GM10248 (cell line): ENCODE measurements at regions of chr2 and their contacts with region 1.

Region 1: DNA sequence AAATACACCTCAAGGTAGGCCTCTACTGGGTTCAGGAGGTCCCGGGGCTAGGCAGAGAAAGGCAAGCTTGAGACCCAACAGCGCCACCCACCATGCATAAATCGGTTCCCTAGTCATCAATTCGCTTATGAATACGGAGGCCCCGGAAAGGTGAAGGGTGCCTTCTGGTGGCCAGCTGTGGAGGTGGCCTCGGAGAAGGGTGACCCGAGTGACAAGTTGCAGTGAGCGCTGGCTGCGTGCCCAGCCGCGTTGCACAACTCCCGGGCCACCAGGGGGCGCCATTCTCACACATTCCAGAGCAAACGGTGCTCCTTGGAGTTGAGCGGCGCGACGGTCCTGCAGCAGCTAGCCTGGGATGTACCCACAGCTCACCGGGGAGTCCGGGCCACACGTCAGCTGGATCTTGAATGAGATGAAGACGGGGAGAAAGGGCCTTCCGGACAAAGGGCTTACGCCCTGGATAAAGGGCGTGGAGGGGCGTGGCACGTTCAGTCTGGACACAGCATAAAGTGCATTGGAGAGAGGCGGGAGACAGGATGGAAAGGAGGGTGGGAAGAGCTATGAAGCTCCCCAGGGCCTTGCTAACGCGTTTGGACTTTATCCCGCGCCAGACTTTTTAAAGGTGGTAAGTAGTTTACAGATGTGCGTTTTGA is 20.4 kb downstream of the TMSB10 start:
- DNase-seq: peak; percentile 84
- CTCF ChIP-seq: peak; percentile 99

Region 2: GRCh38 chr2:84870306-84870705 is 55.5 kb before region 1 on chr2:
- CTCF ChIA-PET with region 1: interaction called, 46 read pairs
- POLR2A ChIA-PET with region 1: no interaction called
- DNase-seq: no peak
- CTCF ChIP-seq: peak; percentile 21

Region 3: DNA sequence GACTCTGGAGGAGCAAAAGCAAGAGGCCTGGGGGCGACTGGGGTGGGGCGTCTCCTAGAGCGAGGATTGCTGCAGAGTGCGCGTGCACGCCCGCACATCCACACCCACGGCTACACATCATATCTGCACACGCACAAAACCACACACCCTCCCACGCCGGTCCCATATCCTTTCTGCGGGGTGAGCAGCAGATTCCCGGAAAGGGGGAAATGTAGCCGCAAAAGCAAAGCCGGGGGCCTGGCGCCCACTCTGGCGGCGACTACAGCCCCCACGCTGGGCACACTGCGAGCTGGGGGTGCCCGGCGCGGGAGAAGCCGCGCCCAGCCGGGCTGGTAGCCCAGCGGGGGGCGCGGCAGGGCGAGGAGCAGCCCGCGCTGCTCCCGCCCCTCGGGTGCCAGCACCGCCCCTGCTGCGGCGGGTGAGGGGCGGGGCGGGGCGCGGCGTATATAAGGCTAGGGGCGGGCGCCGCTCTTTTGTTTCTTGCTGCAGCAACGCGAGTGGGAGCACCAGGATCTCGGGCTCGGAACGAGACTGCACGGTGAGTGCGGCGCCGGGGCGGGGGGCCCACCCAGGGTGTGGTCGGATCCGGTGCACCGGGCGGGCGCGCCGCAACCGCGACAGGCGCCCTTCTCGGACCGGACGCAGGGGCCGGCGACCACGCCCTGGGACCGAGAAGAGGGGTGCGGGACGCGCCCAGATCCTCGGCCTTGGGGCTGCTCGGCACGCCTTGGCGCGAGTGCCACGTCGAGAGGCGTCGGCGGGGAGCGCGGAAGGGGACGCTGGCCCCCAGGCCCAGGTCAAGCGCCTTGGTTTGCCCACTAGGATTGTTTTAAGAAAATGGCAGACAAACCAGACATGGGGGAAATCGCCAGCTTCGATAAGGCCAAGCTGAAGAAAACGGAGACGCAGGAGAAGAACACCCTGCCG is 20.4 kb before region 1 on chr2 and contains the start of gene TMSB10:
- CTCF ChIA-PET with region 1: interaction called, 112 read pairs
- POLR2A ChIA-PET with region 1: interaction called, 23 read pairs
- DNase-seq: peak; percentile 93
- CTCF ChIP-seq: peak; percentile 8

Region 4: GRCh38 chr2:84958135-84959044 is 32.5 kb after region 1 on chr2:
- CTCF ChIA-PET with region 1: interaction called, 13 read pairs
- POLR2A ChIA-PET with region 1: interaction called, 3 read pairs
- DNase-seq: no peak
- CTCF ChIP-seq: no peak

Region 5: GRCh38 chr2:85001595-85001994 is 75.7 kb after region 1 on chr2:
- CTCF ChIA-PET with region 1: interaction called, 23 read pairs
- POLR2A ChIA-PET with region 1: no interaction called
- DNase-seq: no peak
- CTCF ChIP-seq: no peak

Region 6: DNA sequence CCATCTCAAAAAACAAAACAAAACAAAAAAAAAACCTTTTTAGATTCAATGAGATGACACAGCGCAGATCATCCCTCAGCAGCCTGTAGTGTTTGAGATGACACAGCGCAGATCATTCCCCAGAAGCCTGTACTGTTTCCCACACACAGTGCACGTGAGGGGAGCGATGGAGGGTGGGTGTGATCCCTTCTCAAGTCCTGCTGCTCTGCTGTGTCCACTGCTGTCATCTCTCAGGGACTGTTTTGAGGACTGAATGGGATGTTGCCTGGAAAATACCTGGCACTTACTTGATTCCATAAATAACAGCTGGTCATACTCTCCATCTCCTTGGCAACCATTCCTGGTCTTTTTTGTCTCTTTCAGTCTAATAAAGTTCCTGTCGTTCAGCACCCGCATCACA is 376.3 kb after region 1 on chr2:
- CTCF ChIA-PET with region 1: interaction called, 47 read pairs
- POLR2A ChIA-PET with region 1: no interaction called
- DNase-seq: no peak
- CTCF ChIP-seq: no peak